ENCODE measurements at regions of chr10 and their contacts with region 1.

Region 1: GRCh38 chr10:34607894-34608293 is 207.2 kb downstream of the PARD3 start:
- DNase-seq: no peak
- H3K4me3 ChIP-seq: no peak overlapping the region
- H3K27ac ChIP-seq: no peak overlapping the region
- H3K4me1 ChIP-seq: peaks cover 5% of the 10 kb centered on the region
- H3K27me3 ChIP-seq: no peaks in the 10 kb centered on the region
- CTCF ChIP-seq: no peak

Region 2: DNA sequence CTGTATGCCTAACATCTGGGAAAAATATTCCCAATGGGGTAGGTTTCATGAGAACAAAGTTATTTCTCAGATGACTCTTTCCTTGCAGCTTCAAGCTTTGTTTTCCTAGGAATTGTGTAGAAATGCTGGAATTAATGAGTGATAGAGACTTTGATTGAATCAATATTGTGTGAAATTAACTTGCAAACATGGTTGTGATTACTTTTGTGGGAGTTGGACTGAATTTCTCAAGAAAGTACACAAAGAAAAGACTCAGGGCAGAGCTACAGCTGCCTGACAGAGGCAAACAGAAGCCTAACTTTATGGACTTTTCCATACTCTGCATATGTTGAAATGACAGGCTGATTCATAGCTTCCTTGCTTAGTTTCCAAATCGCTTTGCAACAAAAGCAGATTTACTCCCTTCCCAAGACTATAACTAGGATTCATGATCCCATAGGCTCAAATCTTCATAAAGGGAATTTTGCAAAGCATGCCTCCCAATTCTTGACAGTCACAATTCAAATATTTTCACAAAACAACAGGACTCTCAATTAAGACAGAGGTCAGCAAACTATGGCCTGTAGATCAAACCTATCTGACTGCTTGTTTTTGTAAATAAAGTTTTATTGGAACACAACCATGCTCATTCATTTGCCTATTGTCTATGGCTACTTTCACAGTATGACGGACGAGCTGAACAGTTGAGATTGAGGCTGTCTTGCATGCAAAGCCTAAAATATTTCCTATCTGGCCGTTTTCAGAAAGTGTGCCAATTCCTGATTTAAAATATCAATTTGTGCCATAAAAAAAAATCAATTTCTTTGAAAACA is 1301.0 kb before region 1 on chr10:
- CTCF ChIA-PET with region 1: no interaction called
- dilution Hi-C with region 1: no loop called
- in situ Hi-C with region 1: loop called in 1 of 2 experiments (anchors 25 kb)
- intact Hi-C with region 1: no loop called
- DNase-seq: no peak
- H3K4me3 ChIP-seq: no peak overlapping the region
- H3K27ac ChIP-seq: no peak overlapping the region
- H3K4me1 ChIP-seq: peaks cover 8% of the 10 kb centered on the region
- H3K27me3 ChIP-seq: no peaks in the 10 kb centered on the region
- CTCF ChIP-seq: no peak

Measured in mammary epithelial cell (primary cell).